Naive thymus-derived CD4-positive, alpha-beta T cell (primary cell): ENCODE measurements at regions of chr16 and their contacts with region 1.

Region 1: DNA sequence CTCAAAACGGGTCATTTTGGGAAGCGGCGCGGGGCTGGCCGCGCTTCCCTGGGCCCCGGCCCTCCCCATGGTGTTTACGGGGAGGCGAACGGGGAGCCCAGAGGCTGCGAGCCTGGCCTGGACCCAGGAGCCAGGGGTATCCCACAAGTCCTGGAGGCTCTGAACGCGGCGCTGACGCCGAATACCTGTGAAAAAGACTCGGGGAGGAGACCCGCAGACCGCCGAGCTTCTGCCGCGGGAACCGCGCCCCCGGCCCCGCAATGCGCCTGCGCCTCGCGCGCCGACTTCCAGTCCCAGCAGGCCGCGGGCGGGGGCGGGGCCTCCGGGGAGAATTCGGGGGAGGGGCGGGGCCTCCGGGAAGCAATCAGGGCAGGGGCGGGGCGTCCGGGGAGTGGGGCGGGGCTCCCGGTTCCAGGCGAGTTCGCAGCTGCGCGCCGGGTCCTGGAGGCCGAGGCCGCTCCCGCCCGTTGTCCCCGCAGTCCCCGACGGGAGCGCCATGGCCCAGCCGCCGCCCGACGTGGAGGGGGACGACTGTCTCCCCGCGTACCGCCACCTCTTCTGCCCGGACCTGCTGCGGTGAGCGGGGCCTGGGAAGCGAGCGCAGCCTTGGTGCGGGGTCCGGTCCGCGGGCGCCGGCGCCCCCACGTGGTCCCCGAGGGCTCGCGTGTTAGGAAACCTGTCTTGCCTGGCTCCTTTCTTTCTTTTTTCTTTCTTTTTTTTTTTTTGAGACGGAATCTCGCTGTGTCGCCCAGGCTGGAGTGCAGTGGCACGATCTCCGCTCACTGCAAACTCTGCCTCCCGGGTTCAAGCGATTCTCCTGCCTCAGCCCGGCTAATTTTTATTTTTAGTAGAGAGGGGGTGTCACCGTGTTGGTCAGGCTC is at the start of gene DECR2:
- DNase-seq: peak; percentile 89 to 98 (median 95)
- ATAC-seq: peak; percentile 94
- H3K4me3 ChIP-seq: peak within 1 kb of the TSS; percentile 86
- H3K4me3 Mint-ChIP-seq: peak within 1 kb of the TSS; percentile 84 to 92 (median 89)
- H3K27ac ChIP-seq: peak within 1 kb of the TSS; percentile 82
- H3K27ac Mint-ChIP-seq: peak within 1 kb of the TSS; percentile 81 to 97 (median 94)
- H3K4me1 ChIP-seq: peaks cover 0 to 5% of the 10 kb centered on the region in 2 donors
- H3K4me1 Mint-ChIP-seq: peaks cover 10 to 21% (median 11%) of the 10 kb centered on the region in 7 donors
- H3K27me3 ChIP-seq: no peaks in the 10 kb centered on the region
- H3K27me3 Mint-ChIP-seq: peaks cover 0 to 1% (median 0%) of the 10 kb centered on the region in 5 donors
- total RNA-seq, gene DECR2: 7.9 to 13.8 (median 11.6) TPM

Region 2: GRCh38 chr16:38939-39892 is 362.5 kb before region 1 on chr16:
- CTCF ChIA-PET with region 1: no interaction called
- POLR2A ChIA-PET with region 1: no interaction called
- intact Hi-C with region 1: no loop called
- DNase-seq: peak in 5 of 9 donors; percentile 15 to 48 (median 18)
- ATAC-seq: peak; percentile 84
- H3K4me3 ChIP-seq: no peak overlapping the region
- H3K4me3 Mint-ChIP-seq: peak overlapping the region in 7 of 10 donors; percentile 8 to 41 (median 27)
- H3K27ac ChIP-seq: peak overlapping the region; percentile 44
- H3K27ac Mint-ChIP-seq: peak overlapping the region in 8 of 9 donors; percentile 47 to 87 (median 68)
- H3K4me1 ChIP-seq: peaks cover 13 to 22% of the 10 kb centered on the region in 2 donors
- H3K4me1 Mint-ChIP-seq: peaks cover 24 to 56% (median 43%) of the 10 kb centered on the region in 7 donors
- H3K27me3 ChIP-seq: no peaks in the 10 kb centered on the region
- H3K27me3 Mint-ChIP-seq: no peaks in the 10 kb centered on the region

Region 3: GRCh38 chr16:106623-107324 is 294.9 kb before region 1 on chr16:
- CTCF ChIA-PET with region 1: no interaction called
- POLR2A ChIA-PET with region 1: no interaction called
- intact Hi-C with region 1: loop called in 1 of 2 experiments (anchors 1 kb)
- DNase-seq: peak in 8 of 9 donors; percentile 37 to 73 (median 64)
- ATAC-seq: peak; percentile 89
- H3K4me3 ChIP-seq: no peak overlapping the region
- H3K4me3 Mint-ChIP-seq: no peak overlapping the region
- H3K27ac ChIP-seq: no peak overlapping the region
- H3K27ac Mint-ChIP-seq: peak overlapping the region in 3 of 9 donors; percentile 6 to 62 (median 39)
- H3K4me1 ChIP-seq: no peaks in the 10 kb centered on the region
- H3K4me1 Mint-ChIP-seq: peaks cover 0 to 7% (median 4%) of the 10 kb centered on the region in 7 donors
- H3K27me3 ChIP-seq: no peaks in the 10 kb centered on the region
- H3K27me3 Mint-ChIP-seq: no peaks in the 10 kb centered on the region

Region 4: GRCh38 chr16:370443-370842 is 31.3 kb before region 1 on chr16 and contains the start of gene MRPL28:
- CTCF ChIA-PET with region 1: no interaction called
- POLR2A ChIA-PET with region 1: interaction called, 10 read pairs
- intact Hi-C with region 1: loop called in 1 of 2 experiments (anchors 1 kb)
- DNase-seq: peak; percentile 75 to 93 (median 92)
- ATAC-seq: peak; percentile 99
- H3K4me3 ChIP-seq: peak within 1 kb of the TSS; percentile 30
- H3K4me3 Mint-ChIP-seq: peak within 1 kb of the TSS; percentile 81 to 97 (median 90)
- H3K27ac ChIP-seq: peak within 1 kb of the TSS; percentile 67
- H3K27ac Mint-ChIP-seq: peak within 1 kb of the TSS; percentile 80 to 96 (median 89)
- H3K4me1 ChIP-seq: peaks cover 10 to 14% of the 10 kb centered on the region in 2 donors
- H3K4me1 Mint-ChIP-seq: peaks cover 4 to 26% (median 13%) of the 10 kb centered on the region in 7 donors
- H3K27me3 ChIP-seq: no peaks in the 10 kb centered on the region
- H3K27me3 Mint-ChIP-seq: no peaks in the 10 kb centered on the region
- total RNA-seq, gene MRPL28: 21.9 to 86.2 (median 26.5) TPM

Region 5: GRCh38 chr16:425082-425718 is 23.5 kb after region 1 on chr16 and contains the start of gene RAB11FIP3:
- CTCF ChIA-PET with region 1: no interaction called
- POLR2A ChIA-PET with region 1: interaction called, 5 read pairs
- intact Hi-C with region 1: loop called (anchors 1 to 2 kb)
- DNase-seq: peak; percentile 80 to 91 (median 87)
- ATAC-seq: peak; percentile 94
- H3K4me3 ChIP-seq: peak within 1 kb of the TSS; percentile 83
- H3K4me3 Mint-ChIP-seq: peak within 1 kb of the TSS; percentile 78 to 92 (median 88)
- H3K27ac ChIP-seq: peak within 1 kb of the TSS; percentile 92
- H3K27ac Mint-ChIP-seq: peak within 1 kb of the TSS in 8 of 9 donors; percentile 78 to 95 (median 90)
- H3K4me1 ChIP-seq: peaks cover 10 to 17% of the 10 kb centered on the region in 2 donors
- H3K4me1 Mint-ChIP-seq: peaks cover 22 to 39% (median 32%) of the 10 kb centered on the region in 7 donors
- H3K27me3 ChIP-seq: no peaks in the 10 kb centered on the region
- H3K27me3 Mint-ChIP-seq: peaks cover 0 to 18% (median 0%) of the 10 kb centered on the region in 5 donors
- total RNA-seq, gene RAB11FIP3: 37.9 to 53.0 (median 45.5) TPM

Region 6: DNA sequence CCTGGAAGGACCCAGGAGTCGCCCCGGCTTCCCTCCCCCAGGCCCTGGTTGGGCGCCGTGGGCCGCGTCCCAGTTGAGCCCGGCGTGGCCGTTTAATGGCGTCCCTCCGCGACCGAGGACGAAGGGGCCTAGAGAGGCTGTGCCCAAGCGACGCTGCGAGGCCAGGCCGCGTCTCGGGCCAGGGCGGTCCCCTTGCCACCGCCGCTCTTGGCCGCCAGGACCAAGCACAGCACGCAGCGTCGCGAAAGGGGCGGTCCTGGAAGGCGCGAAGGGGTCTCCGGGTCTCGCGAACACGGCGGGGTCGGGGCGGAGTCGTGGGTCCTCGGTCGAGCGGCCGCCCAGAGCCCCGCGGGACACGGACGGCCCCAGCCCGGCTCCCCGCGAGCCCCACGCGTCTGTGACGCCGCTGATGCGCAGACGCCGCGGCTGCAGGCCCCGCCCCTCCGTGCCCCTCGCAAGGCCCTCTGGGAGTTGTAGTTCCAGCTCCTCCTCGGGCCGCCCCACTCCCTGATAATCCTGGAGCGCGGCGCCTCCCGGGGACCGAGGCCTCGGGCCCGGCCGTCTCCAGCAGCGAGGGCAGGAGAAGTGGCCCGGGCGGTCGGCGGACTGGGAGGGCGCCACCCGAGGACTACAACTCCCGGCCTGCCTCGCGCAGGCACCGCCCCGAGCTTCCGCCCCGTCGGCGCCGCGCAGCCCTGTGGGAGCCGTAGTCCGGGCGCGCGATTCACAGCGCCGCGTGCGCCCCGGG is 125.5 kb after region 1 on chr16 and contains the start of gene CAPN15:
- CTCF ChIA-PET with region 1: no interaction called
- POLR2A ChIA-PET with region 1: no interaction called
- intact Hi-C with region 1: loop called in 1 of 2 experiments (anchors 5 kb)
- DNase-seq: peak; percentile 79 to 93 (median 89)
- ATAC-seq: peak; percentile 91
- H3K4me3 ChIP-seq: peak within 1 kb of the TSS; percentile 78
- H3K4me3 Mint-ChIP-seq: peak within 1 kb of the TSS; percentile 83 to 93 (median 88)
- H3K27ac ChIP-seq: peak within 1 kb of the TSS; percentile 97
- H3K27ac Mint-ChIP-seq: peak within 1 kb of the TSS; percentile 68 to 93 (median 83)
- H3K4me1 ChIP-seq: peaks cover 26 to 28% of the 10 kb centered on the region in 2 donors
- H3K4me1 Mint-ChIP-seq: peaks cover 21 to 38% (median 30%) of the 10 kb centered on the region in 7 donors
- H3K27me3 ChIP-seq: no peaks in the 10 kb centered on the region
- H3K27me3 Mint-ChIP-seq: no peaks in the 10 kb centered on the region
- total RNA-seq, gene CAPN15: 51.0 to 89.8 (median 55.6) TPM

Region 7: DNA sequence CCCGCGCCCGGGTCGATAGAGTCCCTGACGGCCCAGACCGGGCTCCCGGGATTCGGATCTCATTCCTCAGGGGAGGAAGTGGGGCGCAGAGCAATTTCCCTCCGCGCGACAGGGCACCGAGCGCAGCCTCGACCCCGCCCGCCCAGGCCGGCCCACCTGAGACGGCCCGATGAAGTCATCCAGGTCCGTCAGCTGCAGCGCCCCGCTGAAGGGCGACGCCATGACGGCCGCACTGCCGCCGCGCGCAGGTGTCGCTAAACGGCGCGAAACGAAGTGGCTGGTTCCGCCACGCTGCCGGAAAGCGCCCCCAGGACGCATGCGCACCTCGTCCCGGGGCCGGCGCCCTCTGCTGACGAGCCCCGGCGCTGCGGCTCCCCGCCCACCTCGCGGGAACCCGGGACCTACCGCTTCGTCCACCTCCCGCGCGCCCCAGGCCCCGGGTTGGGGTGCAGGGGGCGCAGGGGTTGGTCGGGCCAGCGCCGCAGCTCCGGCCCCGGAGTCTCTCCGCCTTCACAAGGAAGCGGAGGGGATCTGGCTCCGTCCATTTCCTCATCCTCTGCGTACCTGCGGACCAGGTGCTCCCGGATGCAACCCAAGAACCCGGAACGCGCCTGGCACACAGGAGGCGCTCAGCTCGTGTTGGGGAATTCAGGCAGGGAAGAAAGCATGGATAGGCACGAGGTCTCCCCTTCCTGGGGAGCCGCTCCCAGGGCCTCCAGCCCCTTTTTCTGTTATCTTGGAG is 339.2 kb after region 1 on chr16 and contains the start of gene CIAO3:
- CTCF ChIA-PET with region 1: no interaction called
- POLR2A ChIA-PET with region 1: no interaction called
- intact Hi-C with region 1: loop called in 1 of 2 experiments (anchors 2 kb)
- DNase-seq: peak; percentile 85 to 99 (median 91)
- ATAC-seq: peak; percentile 93
- H3K4me3 ChIP-seq: peak within 1 kb of the TSS; percentile 81
- H3K4me3 Mint-ChIP-seq: peak within 1 kb of the TSS; percentile 63 to 85 (median 80)
- H3K27ac ChIP-seq: peak within 1 kb of the TSS; percentile 86
- H3K27ac Mint-ChIP-seq: peak within 1 kb of the TSS in 7 of 9 donors; percentile 26 to 81 (median 77)
- H3K4me1 ChIP-seq: peaks cover 4 to 10% of the 10 kb centered on the region in 2 donors
- H3K4me1 Mint-ChIP-seq: peaks cover 0 to 16% (median 5%) of the 10 kb centered on the region in 7 donors
- H3K27me3 ChIP-seq: no peaks in the 10 kb centered on the region
- H3K27me3 Mint-ChIP-seq: no peaks in the 10 kb centered on the region
- total RNA-seq, gene CIAO3: 39.0 to 55.5 (median 46.1) TPM